ENCODE measurements at regions of chr9 and their contacts with region 1.

Region 1: DNA sequence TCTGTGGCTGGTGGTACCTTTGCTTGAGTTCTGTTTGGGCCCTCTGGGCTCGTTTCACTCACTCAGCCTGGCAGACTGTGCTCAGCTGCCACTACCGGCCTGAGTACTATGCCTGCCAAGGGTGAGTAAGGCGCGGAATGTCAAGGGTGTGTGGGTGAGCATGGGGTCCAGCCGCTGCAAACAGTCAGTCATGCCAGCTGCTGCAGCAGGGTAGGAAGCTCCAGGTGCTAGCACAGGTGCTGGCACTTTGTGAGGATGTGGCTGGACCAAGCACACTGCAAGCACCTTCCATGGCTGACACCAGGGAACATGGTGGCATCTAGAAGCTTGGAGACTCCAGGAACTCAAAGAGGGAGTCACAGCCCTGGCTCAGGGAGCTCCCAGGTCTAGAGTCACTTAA is 368.6 kb upstream of the ACO1 start:
- DNase-seq: no peak
- ATAC-seq: no peak
- H3K4me3 ChIP-seq: no peak overlapping the region
- H3K27ac ChIP-seq: no peak overlapping the region
- H3K4me1 ChIP-seq: no peaks in the 10 kb centered on the region
- H3K27me3 ChIP-seq: no peaks in the 10 kb centered on the region

Region 2: DNA sequence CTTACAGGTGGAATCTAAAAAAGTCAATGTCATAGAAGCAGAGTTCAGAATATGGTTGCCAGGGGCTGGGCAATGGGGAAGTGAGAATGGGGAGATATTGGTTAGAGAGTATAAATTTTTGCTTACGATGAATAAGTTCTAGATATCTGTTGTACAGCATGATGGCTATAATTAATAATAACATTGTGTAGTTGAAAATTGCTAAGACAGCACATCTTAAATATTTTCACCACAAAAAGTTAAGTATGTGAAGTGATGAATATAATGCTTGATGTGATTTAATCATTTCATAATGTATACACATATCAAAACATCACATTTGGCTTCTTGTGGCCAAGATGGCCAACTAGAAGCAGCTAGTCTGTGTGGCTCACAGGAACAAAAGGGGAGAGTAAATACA is 57.2 kb before region 1 on chr9:
- intact Hi-C with region 1: no loop called
- DNase-seq: no peak
- ATAC-seq: no peak
- H3K4me3 ChIP-seq: no peak overlapping the region
- H3K27ac ChIP-seq: no peak overlapping the region
- H3K4me1 ChIP-seq: no peaks in the 10 kb centered on the region
- H3K27me3 ChIP-seq: no peaks in the 10 kb centered on the region

Region 3: DNA sequence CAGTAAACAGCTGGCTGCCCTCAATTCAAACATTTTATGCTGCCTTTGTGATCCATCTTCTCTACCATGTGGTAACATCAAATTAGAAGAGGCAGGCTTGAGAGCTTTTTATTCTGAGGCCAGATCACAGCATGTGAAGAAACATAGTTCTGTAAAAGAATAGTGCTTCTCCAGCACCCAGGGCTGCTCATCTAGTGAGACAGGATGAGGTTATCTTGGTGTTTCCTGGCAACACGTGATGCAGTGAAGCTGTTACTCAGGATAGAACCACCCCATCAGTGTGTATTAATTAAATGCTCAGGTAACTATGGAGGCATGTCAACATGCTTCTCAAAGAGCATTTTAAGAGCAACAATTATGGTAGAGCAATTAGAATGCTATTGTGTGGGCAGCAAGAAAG is 31.9 kb before region 1 on chr9:
- intact Hi-C with region 1: loop called in 1 of 4 experiments (anchors 10 kb)
- DNase-seq: no peak
- ATAC-seq: no peak
- H3K4me3 ChIP-seq: no peak overlapping the region
- H3K27ac ChIP-seq: no peak overlapping the region
- H3K4me1 ChIP-seq: no peaks in the 10 kb centered on the region
- H3K27me3 ChIP-seq: no peaks in the 10 kb centered on the region